K562 (cell line): ENCODE measurements at regions of chr7 and their contacts with region 1.

Region 1: DNA sequence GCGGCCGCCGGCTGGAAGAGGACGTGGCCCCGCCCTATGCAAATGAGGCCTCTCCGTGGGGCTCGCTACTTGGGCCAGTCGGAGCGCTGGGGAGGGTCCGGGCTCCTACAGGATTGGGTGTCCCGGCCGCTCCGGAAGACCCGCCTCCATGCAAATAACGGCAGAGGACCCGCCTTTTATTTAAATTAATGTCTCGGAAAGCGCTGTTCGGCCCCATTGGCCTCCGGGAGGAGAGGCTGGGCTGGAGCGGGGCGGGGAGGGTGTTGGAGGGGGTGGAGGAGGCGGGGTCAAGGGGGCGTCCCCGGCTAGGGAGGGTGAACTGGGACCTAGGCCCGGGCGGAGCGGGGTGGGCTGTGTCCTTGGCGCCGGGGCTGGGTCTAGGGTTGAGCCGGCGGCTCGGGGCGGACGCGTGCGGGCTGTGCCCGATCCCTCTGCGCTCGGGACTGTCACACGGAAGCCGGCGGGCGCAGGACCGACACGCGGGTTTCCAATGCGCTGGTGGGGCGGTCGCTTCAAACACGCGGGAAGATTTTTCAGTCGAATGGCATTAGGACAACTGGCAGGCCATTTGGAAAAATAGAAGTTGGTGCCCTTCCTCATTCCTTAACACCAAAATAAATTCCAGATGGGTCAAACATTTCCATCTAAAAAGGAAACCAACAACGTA is 344 bp upstream of the POLM start:
- DNase-seq: peak; percentile 97 to 99 (median 98)
- ATAC-seq: peak; percentile 97
- H3K4me3 ChIP-seq: peak overlapping the region; percentile 53
- H3K27ac ChIP-seq: peak overlapping the region; percentile 72
- H3K4me1 ChIP-seq: peaks cover 9 to 29% of the 10 kb centered on the region in 2 experiments; a peak in 4 of 5 replicates
- H3K27me3 ChIP-seq: no peaks in the 10 kb centered on the region
- CTCF ChIP-seq: no peak
- EP300 ChIP-seq: no peak
- POLR2A ChIP-seq: peak; percentile 71
- RAD21 ChIP-seq: no peak

Region 2: DNA sequence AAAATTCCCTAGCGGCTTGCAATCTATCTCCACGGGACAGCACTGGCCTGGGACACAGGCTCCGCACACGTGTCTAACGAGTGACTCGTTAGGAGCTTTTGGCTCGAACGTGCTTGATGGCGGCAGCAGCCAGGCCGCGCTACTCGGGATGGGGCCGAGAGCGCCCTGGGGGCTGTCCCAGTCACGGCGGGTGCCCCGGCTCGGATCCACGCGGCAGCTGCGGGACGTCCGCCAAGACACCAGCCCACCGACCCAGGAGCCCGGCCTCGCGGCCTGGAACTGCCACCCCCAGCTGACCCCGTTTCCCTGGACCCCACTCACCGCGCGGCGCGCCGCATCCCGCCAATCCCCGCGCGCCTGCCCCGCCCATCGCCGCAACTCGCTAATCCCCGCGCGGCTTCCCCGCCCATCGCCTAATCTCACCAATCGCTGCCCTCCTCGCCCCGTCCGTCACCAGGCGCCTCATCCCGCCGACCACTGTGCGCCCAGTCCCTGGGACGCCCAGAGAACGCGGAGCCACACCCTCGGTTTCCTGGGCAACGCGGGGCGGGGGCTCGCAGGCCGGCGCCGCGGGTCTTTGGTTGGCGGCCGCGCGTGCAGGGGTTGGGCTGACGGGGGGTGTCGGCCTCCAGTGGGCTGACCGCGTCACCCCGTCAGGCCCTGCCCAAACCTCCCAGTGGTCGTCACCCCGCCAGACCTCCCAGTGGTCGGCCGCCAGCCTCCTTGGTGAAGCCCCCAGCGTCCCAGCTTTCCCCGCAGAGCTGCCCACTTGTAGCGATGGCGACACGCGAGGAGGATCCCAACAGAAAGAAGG is 40.7 kb after region 1 on chr7 and contains the start of gene POLD2:
- CTCF ChIA-PET with region 1: no interaction called
- POLR2A ChIA-PET with region 1: no interaction called
- in situ Hi-C with region 1: no loop called
- intact Hi-C with region 1: loop called (anchors 1 kb)
- DNase-seq: peak; percentile 98 to 99 (median 98)
- ATAC-seq: peak; percentile 99
- H3K4me3 ChIP-seq: peak within 1 kb of the TSS; percentile 93
- H3K27ac ChIP-seq: peak within 1 kb of the TSS; percentile 88
- H3K4me1 ChIP-seq: peaks cover 14 to 26% of the 10 kb centered on the region in 2 experiments; a peak in 4 of 5 replicates
- H3K27me3 ChIP-seq: no peaks in the 10 kb centered on the region
- CTCF ChIP-seq: no peak
- EP300 ChIP-seq: no peak
- POLR2A ChIP-seq: peak; percentile 84
- RAD21 ChIP-seq: no peak
- polyA plus RNA-seq, gene POLD2: 29.7 to 82.9 TPM